Tibial artery (tissue), 4 donors: ENCODE measurements at regions of chr17 and their contacts with region 1.

Region 1: GRCh38 chr17:8745586-8746500 is 1.2 kb upstream of the CCDC42 start:
- DNase-seq: peak; percentile 63 to 86
- H3K4me3 ChIP-seq: peak overlapping the region; percentile 60 to 78
- H3K27ac ChIP-seq: peak overlapping the region; percentile 76 to 87
- H3K4me1 ChIP-seq: peaks cover 0 to 33% (median 10%) of the 10 kb centered on the region in 4 donors
- H3K27me3 ChIP-seq: no peaks in the 10 kb centered on the region
- CTCF ChIP-seq: peak; percentile 76 to 97

Region 2: DNA sequence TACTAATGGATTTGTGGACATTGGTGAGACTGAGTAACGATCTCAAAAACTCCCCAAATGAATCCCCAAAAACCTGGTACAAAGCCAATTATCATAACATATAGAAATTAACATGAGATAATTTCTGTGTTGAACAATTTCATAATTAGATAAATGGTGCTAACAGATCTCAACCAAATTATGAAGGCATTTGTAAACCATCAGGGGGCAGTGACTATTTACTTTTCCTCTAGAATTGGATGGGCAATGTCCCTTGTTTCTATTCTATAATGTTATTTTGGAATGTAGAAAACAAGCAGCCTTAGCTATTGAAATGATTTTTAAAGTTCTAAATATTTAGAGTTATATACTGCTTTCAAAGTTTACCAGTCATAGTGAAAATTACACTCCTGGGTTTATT is 173.1 kb before region 1 on chr17:
- intact Hi-C with region 1: loop called (anchors 5 kb)
- DNase-seq: no peak
- H3K4me3 ChIP-seq: no peak overlapping the region
- H3K27ac ChIP-seq: peak overlapping the region; percentile 46 to 71
- H3K4me1 ChIP-seq: peaks cover 0 to 62% (median 15%) of the 10 kb centered on the region in 4 donors
- H3K27me3 ChIP-seq: no peaks in the 10 kb centered on the region
- CTCF ChIP-seq: peak; percentile 19 to 25

Region 3: DNA sequence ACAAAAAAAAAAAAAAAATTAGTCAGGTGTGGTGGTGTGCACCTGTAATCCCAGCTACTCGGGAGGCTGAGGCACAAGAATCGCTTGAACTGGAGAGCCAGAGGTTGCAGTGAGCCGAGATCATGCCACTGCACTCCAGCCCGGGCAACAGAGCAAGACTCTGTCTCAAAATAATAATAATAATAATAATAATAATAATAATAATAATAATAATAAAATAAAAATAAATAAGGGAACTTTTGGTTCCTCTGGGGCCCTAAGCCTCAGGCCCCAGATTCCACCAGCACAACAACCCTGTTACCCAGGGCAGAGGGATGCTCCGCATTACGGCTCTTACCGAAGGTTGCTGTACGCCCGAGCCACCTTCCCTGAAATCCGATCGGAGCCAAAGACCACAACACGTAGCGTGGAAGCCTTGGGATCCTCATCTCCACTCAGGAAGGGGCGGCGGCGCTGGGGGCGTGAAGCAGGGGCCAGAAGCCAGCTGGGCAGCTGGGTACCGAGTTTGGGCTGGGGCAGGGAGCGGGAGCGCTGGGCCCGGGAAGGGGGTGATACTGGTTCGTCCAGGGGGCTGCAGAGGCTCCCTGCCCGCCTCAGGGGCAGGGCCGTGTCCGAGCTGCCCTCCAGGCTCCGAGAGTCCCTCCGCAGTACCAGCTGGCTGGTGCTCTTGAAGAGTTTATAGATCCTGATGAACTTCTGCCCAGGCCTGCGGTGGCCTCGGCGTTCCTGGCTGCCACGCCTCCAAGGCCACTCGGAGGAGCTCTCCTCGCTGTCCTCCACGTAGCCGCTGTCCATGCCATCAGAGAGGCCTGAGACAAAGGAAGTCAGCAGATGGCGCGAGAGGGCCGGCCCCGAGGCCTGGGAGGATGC is 142.2 kb after region 1 on chr17:
- intact Hi-C with region 1: no loop called
- DNase-seq: peak in 1 of 2 donors; percentile 40
- H3K4me3 ChIP-seq: no peak overlapping the region
- H3K27ac ChIP-seq: no peak overlapping the region
- H3K4me1 ChIP-seq: no peaks in the 10 kb centered on the region
- H3K27me3 ChIP-seq: no peaks in the 10 kb centered on the region
- CTCF ChIP-seq: no peak